ENCODE measurements at regions of chr7 and their contacts with region 1.

Region 1: GRCh38 chr7:43869867-43870240 is 537 bp upstream of the MRPS24 start:
- H3K4me3 Mint-ChIP-seq: peak overlapping the region; percentile 83
- H3K27ac Mint-ChIP-seq: peak overlapping the region; percentile 98
- H3K4me1 Mint-ChIP-seq: peaks cover 56% of the 10 kb centered on the region
- H3K27me3 Mint-ChIP-seq: no peaks in the 10 kb centered on the region

Region 2: GRCh38 chr7:43834463-43835251 is 35.2 kb before region 1 on chr7:
- intact Hi-C with region 1: no loop called
- H3K4me3 Mint-ChIP-seq: peak overlapping the region; percentile 26
- H3K27ac Mint-ChIP-seq: peak overlapping the region; percentile 55
- H3K4me1 Mint-ChIP-seq: peaks cover 13% of the 10 kb centered on the region
- H3K27me3 Mint-ChIP-seq: peaks cover 5% of the 10 kb centered on the region

Region 3: DNA sequence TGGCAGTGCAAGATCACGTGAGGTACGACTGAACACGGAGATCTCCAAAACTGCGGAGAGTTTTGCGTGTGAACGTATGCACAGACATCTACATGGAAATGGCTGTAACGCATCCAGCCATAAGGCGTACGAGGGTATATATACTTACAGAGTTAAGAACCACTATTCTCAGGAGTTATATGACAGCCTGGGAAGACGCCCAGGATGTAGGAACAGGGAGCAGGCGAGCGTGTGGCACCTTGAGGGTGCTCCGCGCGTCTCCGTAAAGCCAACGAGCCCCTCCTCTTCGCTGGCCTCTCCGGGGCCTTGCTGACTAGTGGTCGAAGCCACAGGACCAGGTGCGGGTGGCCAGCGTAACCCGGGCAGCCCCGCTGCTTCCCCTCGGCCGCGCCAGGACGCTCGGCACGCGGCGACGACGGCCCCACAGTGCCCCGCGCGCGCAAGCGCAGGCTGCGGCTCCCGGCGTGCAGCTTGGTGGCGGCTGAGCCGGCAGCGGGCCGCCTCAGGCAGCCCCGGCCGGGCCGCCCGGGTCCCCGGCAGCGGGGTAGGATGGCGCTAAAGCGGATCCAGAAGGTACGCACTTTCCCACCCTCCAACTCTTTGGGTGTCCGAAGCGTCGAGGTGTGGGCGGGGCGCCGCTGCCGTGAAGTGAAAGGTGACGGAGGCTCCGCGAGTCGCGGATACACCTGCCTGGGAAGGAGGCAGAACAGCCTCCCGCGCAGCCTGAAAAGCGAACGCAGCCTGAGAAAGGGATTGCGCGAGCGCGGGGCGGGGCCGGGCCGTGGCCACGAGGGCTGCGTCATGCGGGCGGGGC is 56.3 kb after region 1 on chr7 and contains the start of gene UBE2D4:
- intact Hi-C with region 1: loop called (anchors 2 kb)
- H3K4me3 Mint-ChIP-seq: peak within 1 kb of the TSS; percentile 88
- H3K27ac Mint-ChIP-seq: peak within 1 kb of the TSS; percentile 86
- H3K4me1 Mint-ChIP-seq: peaks cover 27% of the 10 kb centered on the region
- H3K27me3 Mint-ChIP-seq: no peaks in the 10 kb centered on the region

Measured in dendritic cell treated with granulocyte-macrophage colony-stimulating factor and Interleukin-4, amounts not matched to agents 40 ng/mL and 50 ng/mL, for 4 days (primary cell).